ENCODE measurements at regions of chr20 and their contacts with region 1.

Region 1: DNA sequence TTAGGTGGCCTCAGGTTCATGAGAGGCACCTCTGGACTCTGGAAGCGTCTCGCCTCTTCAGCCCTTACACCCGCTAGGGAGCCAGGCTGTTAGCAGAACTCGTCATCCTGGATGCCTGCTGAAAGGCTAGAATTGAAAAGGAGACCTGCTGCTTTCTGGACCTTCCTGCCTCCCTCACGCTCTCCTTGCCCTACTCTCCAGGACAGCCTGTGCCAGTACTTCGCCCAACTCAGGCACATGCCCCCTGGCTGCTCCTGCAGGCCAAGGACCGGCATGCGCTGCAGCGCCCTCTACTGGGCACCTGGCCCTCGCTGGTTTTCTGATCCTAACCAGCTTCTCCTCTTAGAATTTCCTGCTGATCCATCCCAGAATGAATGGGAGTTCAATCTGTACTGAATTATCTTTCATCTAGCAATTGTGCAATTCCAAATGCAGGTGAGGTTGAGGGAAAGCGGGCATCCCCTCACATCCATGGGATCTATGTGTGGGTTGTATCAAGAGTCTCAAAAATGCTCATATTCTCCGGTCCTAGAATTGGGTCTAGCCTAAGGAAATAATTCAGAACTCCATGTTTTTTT is 77.9 kb downstream of the PTPN1 start:
- DNase-seq: peak; percentile 72 to 90
- ATAC-seq: peak; percentile 78 to 88; a peak in 5 of 6 replicates
- H3K4me3 ChIP-seq: no peak overlapping the region
- H3K27ac ChIP-seq: 0 out of 6 replicates have a peak overlapping the region, but pooled peaks of 1 of the 2 experiments have one; percentile 4
- H3K4me1 ChIP-seq: no peaks in the 10 kb centered on the region
- CTCF ChIP-seq: peak; percentile 88
- EP300 ChIP-seq: no peak
- POLR2A ChIP-seq: no peak
- RAD21 ChIP-seq: peak; percentile 57 to 63

Region 2: DNA sequence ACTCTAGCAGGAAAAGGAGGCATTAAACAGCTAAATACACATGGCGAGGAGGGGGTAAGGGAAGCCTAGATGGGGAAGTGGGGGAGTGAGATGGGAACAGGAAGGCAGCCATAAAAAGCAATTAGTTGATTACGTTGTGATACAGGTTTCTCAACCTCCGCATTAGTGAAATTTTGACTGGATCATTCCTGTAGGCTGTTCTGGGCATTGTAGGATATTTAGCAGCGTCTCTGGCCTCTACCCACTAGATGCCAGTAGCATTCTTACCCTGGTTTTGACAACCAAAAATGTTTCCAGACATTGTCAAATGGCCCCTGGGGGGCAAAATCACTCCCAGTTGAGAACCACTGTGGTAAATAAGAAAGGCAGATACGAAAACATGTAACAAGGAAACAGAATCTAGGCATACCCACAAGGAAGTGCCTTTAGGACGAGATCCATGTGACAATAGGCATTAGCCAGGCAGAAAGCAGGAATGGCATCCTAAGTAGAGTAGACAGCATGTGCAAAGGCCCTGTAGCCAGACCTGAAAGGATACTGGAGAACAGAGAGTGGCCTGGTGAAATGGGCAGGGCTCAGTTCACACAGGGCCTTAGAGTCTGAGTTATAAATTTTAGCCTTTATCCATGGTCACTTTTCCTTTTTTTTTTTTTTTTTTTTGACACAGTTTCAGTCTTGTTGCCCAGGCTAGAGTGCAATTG is 103.7 kb before region 1 on chr20:
- CTCF ChIA-PET with region 1: interaction called, 11 read pairs
- POLR2A ChIA-PET with region 1: no interaction called
- DNase-seq: no peak
- ATAC-seq: no peak
- H3K4me3 ChIP-seq: no peak overlapping the region
- H3K27ac ChIP-seq: peak overlapping the region; percentile 62 to 82; a peak in 5 of 6 replicates
- H3K4me1 ChIP-seq: no peaks in the 10 kb centered on the region
- CTCF ChIP-seq: no peak
- EP300 ChIP-seq: no peak
- POLR2A ChIP-seq: no peak
- RAD21 ChIP-seq: no peak

Region 3: GRCh38 chr20:50605136-50605535 is 17.0 kb after region 1 on chr20:
- CTCF ChIA-PET with region 1: interaction called, 13 read pairs
- POLR2A ChIA-PET with region 1: no interaction called
- DNase-seq: no peak
- ATAC-seq: no peak
- H3K4me3 ChIP-seq: no peak overlapping the region
- H3K27ac ChIP-seq: no peak overlapping the region
- H3K4me1 ChIP-seq: no peaks in the 10 kb centered on the region
- CTCF ChIP-seq: no peak
- EP300 ChIP-seq: no peak
- POLR2A ChIP-seq: no peak
- RAD21 ChIP-seq: no peak

Region 4: GRCh38 chr20:50610221-50610620 is 22.1 kb after region 1 on chr20:
- CTCF ChIA-PET with region 1: interaction called, 13 read pairs
- POLR2A ChIA-PET with region 1: no interaction called
- DNase-seq: peak in 1 of 2 experiments; percentile 38
- ATAC-seq: peak; percentile 60 to 76
- H3K4me3 ChIP-seq: no peak overlapping the region
- H3K27ac ChIP-seq: no peak overlapping the region
- H3K4me1 ChIP-seq: no peaks in the 10 kb centered on the region
- CTCF ChIP-seq: no peak
- EP300 ChIP-seq: no peak
- POLR2A ChIP-seq: no peak
- RAD21 ChIP-seq: peak in 1 of 2 experiments; percentile 33; a peak in 2 of 5 replicates